ENCODE measurements at regions of chr5 and their contacts with region 1.

Region 1: DNA sequence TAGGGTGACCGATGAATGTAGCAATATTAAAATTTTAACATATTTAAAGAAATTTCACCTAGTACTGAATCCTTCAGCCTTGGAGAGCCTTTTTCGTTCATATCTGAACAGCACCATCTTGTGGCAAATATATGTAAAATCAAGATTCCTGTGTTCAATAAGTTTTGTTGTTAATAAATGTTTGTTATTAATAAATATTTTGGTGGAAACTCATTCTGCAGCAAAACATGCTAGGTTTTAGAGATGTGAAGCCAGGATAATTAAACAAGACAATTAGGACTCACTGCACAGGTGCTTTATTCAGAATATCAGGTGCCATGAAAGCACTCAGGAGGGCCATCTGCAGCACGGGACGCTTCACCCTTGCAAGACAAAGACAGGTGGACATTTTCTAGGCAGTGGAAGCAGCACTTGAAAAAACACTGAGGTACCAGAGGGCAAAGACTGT is 15.7 kb downstream of the TICAM2 start:
- DNase-seq: no peak
- H3K4me3 ChIP-seq: no peak overlapping the region
- CTCF ChIP-seq: no peak
- POLR2A ChIP-seq: no peak

Region 2: DNA sequence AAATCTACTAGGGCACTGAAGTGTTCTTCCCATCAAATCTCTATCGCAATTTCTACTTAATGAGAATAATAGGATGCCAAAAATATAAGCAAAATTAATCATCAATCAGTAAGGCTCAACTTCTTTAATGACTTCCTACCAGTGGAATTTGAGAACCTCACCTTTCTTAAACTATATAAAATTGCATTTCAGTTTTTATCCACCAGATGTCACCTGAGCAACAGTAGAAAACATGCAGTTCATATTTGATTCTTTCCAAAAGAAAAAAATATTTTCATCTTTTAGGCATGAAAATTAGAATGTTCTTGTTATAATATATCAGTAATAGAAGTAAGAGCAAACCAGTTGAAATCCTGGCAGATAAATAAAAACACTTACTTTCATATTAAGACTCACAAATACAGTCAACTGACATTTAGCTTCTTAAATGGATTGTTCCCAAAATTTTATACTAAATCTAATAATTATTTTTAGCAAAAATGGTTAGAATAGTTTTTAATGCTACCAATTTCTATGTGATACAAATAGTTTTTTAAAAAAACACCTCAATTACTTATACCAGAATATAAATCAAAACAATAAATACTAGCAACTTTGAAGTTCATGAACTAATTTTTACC is 276.8 kb before region 1 on chr5:
- intact Hi-C with region 1: loop called (anchors 5 kb)
- DNase-seq: no peak
- H3K4me3 ChIP-seq: no peak overlapping the region
- CTCF ChIP-seq: peak in 2 of 3 donors; percentile 30 to 42
- POLR2A ChIP-seq: no peak

Measured in lower leg skin (tissue), 4 donors.